ENCODE measurements at regions of chr19 and their contacts with region 1.

Region 1: DNA sequence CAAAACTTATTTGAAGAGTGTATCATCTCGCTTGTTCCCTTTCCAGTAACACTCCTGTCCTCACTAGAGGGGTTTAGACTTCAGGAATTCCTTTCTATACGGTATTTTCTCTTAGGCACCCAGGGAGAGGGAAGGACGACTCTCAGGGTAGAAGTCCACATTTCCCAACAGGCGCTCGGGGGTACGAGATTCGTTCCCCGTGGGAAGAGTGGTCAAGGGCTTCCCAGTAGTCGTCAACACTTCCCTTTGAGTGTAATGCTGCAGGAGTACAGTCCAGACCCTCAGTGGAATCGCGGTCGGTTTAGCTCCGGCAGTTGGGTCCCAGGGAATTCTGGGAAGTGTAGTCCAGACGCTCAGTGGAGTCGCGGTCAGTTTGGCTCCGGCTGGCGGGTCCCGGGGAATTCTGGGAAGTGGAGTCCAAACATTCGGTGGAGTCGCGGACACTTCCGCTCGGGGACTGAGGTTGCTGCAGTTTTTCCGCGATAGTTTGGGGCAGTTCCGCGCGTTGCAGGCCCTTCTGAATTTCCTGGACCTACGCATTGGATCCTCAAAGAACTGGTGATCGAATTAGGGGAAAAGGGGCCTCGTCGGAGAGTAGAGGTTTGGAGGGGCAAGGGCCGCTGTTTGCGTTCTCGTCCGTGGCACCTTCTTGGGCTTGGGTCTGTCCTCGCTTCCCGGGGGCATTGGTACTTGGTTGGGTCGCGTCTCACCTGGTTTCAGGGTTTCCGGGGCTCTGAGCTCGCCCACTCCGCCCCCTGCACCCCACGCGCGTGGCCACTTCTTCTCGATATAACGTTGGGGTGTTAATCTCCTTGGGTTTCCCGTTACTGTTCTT is at the start of gene ZNF224:
- DNase-seq: peak; percentile 92
- H3K4me3 Mint-ChIP-seq: peak within 1 kb of the TSS; percentile 99
- H3K27ac Mint-ChIP-seq: peak within 1 kb of the TSS; percentile 93
- H3K4me1 Mint-ChIP-seq: peaks cover 6% of the 10 kb centered on the region
- H3K27me3 Mint-ChIP-seq: no peaks in the 10 kb centered on the region
- CTCF ChIP-seq: no peak
- total RNA-seq, gene ZNF224: 17.8 and 22.7 TPM in 2 replicates

Region 2: DNA sequence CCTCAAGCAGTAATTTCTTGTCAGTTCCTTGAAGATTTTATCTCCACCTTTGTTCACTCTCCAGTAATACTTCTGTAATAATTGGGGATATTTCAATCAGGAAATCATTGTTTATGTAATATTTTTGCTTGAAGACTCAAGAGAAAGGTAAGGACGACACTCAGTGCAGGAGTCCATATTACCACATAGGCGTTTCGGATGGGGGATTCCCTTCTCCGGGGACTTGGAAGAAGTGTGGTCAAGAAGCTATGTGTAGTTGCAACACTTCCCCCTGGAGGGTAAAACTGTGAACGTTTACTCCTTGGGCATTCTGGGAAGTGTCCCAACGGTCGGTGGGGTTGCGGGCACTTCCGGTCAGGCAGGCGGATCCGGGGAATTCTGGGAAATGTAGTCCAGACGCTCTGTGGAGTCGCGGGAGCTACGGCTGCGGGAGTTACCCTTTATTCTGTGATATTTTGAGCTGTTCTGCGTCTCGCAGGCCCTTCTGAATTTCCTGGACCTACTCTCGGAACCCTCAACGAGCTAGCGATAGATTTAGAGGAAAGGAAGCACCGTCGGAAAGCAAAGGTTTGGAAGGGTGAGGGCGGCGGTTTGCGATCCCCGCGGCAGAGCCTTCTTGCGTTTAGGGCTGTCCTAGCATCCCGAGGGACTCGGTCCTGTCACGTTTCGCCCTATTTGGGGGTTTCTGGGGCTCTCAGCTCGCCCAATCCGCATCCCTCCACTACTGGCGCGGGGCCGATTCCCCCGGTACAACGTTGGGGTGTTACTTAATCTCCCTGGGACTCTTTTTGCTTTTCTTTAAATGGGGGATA is 143.1 kb before region 1 on chr19 and contains the start of gene ZNF221:
- CTCF ChIA-PET with region 1: no interaction called
- POLR2A ChIA-PET with region 1: interaction called, 13 read pairs
- intact Hi-C with region 1: no loop called
- DNase-seq: peak; percentile 97
- H3K4me3 Mint-ChIP-seq: peak within 1 kb of the TSS; percentile 96
- H3K27ac Mint-ChIP-seq: peak within 1 kb of the TSS; percentile 91
- H3K4me1 Mint-ChIP-seq: no peaks in the 10 kb centered on the region
- H3K27me3 Mint-ChIP-seq: peaks cover 11% of the 10 kb centered on the region
- CTCF ChIP-seq: no peak
- total RNA-seq, gene ZNF221: 1.2 and 1.8 TPM in 2 replicates

Region 3: DNA sequence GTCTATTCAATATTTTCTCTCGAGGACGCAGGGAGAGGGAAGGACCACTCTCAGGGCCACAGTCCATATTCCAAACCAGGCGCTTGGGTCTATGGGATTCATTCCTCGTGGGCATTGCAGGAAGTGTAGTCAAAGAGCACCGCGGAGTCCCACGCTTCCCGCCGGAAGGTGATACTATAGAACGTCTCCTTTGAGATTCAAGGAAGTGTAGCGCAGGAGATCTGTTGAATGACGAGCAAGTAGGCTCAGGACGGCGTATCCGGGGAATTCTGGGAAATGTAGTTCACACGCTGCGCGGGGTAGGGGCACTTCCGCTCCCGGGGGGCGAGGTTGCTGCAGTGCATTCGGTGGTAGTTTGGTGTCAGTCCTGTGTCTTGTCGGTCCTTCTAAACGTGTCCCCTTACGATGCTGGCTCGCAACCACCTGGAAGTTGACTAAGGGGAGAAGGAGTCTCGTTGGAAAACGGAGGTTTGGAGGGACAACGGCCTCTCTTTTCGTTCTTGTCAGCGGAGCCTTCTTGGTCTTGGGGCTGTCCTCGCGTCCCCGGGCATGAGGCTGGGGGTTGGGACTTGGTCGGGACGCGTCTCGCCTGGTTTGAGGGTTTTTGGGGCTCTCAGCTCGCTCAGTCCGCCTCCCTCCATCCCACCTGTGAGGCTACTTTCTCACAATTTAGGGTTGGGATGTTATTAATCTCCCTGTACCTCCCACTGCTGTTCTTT is 22.2 kb before region 1 on chr19 and contains the start of gene ZNF284:
- CTCF ChIA-PET with region 1: interaction called, 7 read pairs
- POLR2A ChIA-PET with region 1: interaction called, 29 read pairs
- intact Hi-C with region 1: loop called (anchors 1 kb)
- DNase-seq: peak; percentile 92
- H3K4me3 Mint-ChIP-seq: peak within 1 kb of the TSS; percentile 83
- H3K27ac Mint-ChIP-seq: peak within 1 kb of the TSS; percentile 84
- H3K4me1 Mint-ChIP-seq: peaks cover 17% of the 10 kb centered on the region
- H3K27me3 Mint-ChIP-seq: no peaks in the 10 kb centered on the region
- CTCF ChIP-seq: no peak
- total RNA-seq, gene ZNF284: 2.5 and 3.8 TPM in 2 replicates

Region 4: GRCh38 chr19:44113138-44113783 is 19.1 kb after region 1 on chr19 and contains the start of gene ZNF225:
- CTCF ChIA-PET with region 1: interaction called, 4 read pairs
- POLR2A ChIA-PET with region 1: interaction called, 42 read pairs
- intact Hi-C with region 1: loop called (anchors 1 kb)
- DNase-seq: peak; percentile 99
- H3K4me3 Mint-ChIP-seq: peak within 1 kb of the TSS; percentile 86
- H3K27ac Mint-ChIP-seq: peak within 1 kb of the TSS; percentile 57
- H3K4me1 Mint-ChIP-seq: peaks cover 6% of the 10 kb centered on the region
- H3K27me3 Mint-ChIP-seq: no peaks in the 10 kb centered on the region
- CTCF ChIP-seq: no peak
- total RNA-seq, gene ZNF225: 3.6 and 5.7 TPM in 2 replicates

Region 5: DNA sequence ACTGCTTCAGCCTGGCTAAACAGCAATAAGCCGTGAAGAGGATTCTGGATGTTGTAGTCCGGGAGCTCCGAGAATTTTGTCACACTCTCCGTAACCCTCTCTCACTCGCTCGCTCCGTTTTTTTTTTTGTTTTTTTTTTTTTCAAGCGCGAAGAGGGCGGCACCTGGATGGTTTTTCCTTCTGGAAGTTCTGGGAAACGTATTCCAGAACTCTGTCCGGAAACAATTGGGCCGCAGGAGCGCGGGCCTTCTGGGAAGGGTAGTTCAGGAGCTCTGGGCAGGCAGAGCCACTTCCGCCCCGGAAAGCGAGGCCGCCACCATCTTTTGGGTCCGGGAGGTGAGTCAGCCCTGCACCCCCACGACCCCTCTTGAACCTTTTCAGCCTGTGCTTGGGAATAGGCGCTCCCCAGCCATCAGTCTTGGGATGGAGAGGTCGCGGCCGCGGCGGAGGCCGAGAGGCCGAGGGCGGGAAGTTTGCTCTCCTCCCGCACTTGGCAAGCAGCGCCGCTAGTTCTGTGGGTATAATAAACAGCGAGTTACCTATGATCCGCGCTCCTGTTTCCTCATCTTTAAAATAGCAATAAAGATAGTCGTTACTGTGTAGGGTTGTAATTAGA is 118.2 kb after region 1 on chr19 and contains the start of gene ZNF227:
- CTCF ChIA-PET with region 1: no interaction called
- POLR2A ChIA-PET with region 1: interaction called, 15 read pairs
- intact Hi-C with region 1: loop called (anchors 2 kb)
- DNase-seq: peak; percentile 96
- H3K4me3 Mint-ChIP-seq: peak within 1 kb of the TSS; percentile 94
- H3K27ac Mint-ChIP-seq: peak within 1 kb of the TSS; percentile 92
- H3K4me1 Mint-ChIP-seq: peaks cover 9% of the 10 kb centered on the region
- H3K27me3 Mint-ChIP-seq: no peaks in the 10 kb centered on the region
- CTCF ChIP-seq: no peak
- total RNA-seq, gene ZNF227: 22.6 and 29.0 TPM in 2 replicates